Activated naive CD4-positive, alpha-beta T cell treated with anti-CD3 and anti-CD28 coated beads for 36 hours (primary cell): ENCODE measurements at regions of chr10 and their contacts with region 1.

Region 1: GRCh38 chr10:26860443-26861204 is at the start of gene ABI1:
- DNase-seq: peak; percentile 98
- H3K4me3 Mint-ChIP-seq: peak within 1 kb of the TSS; percentile 98
- H3K27ac Mint-ChIP-seq: peak within 1 kb of the TSS; percentile 99
- H3K4me1 Mint-ChIP-seq: peaks cover 30% of the 10 kb centered on the region
- H3K27me3 Mint-ChIP-seq: no peaks in the 10 kb centered on the region
- total RNA-seq, gene ABI1: 34.5 to 37.2 TPM

Region 2: DNA sequence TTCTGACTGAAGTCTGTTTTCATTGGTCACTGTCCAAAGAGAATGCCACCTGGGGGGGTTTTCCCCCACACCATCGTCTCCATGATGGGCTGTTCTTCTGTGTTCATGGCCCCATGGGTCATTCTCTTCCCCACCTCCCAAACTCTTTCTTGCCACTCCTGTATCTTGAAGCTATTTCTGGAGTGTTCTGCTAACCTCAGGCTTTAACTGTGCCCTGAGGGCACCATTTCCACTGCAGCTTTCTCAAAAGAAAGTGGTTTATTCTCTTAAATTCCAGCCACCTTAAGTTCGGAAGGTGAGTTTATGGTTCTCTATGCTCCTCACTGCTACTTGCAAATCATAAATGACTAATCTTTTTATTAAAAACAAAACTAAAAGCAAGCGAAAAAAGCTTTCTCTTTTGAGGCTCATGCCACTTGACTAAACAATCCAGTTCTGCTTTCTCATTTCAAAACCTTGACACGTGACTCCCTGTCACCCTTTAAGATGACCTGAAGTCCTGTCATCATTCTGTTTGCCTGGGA is 429.9 kb before region 1 on chr10:
- CTCF ChIA-PET with region 1: no interaction called
- intact Hi-C with region 1: loop called (anchors 2 kb)
- DNase-seq: peak; percentile 64
- H3K4me3 Mint-ChIP-seq: peak overlapping the region; percentile 46
- H3K27ac Mint-ChIP-seq: peak overlapping the region; percentile 83
- H3K4me1 Mint-ChIP-seq: peaks cover 26% of the 10 kb centered on the region
- H3K27me3 Mint-ChIP-seq: no peaks in the 10 kb centered on the region

Region 3: GRCh38 chr10:26468700-26469099 is 391.9 kb before region 1 on chr10:
- CTCF ChIA-PET with region 1: no interaction called
- intact Hi-C with region 1: no loop called
- DNase-seq: peak; percentile 56
- H3K4me3 Mint-ChIP-seq: peak overlapping the region; percentile 66
- H3K27ac Mint-ChIP-seq: peak overlapping the region; percentile 78
- H3K4me1 Mint-ChIP-seq: peaks cover 83% of the 10 kb centered on the region
- H3K27me3 Mint-ChIP-seq: no peaks in the 10 kb centered on the region

Region 4: DNA sequence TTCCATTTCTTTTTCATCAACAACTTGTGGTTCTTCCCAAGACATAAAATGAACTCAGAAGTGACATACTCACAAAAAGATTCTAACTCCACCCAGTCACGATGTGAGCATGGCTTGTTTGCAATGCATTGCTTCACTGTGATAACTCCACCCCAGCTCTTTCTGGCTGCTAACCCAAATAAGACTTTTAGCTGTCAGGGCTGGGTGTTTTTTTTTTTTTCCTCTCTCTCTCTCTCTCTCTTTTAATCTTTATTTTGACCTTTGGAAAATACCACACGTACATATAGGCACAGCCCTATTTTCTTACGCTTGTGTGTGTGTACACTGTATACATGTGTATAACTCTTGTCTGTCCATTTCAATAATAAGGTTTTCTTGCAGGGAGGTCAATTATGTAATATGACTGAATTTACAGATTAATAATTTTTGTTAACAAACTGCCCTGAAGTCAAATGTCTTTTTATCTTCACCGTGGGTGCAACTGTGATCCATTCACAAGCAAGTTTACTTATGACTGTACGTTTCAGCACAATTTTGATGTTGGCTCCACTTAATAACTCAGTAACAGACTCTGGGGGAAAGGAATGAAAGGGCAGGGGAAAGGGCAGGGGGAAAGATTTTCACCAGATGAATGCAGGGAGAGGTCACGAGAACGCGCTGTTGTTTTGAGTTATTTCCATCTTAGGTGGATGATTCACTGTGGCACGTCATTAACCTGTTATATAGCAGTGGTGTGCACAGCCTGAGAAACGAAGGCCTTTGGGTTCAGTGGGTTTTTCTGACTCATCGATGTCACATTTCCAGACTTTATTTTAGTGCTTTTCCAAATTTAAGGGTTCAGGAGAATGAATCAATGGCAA is 373.4 kb before region 1 on chr10:
- CTCF ChIA-PET with region 1: no interaction called
- intact Hi-C with region 1: loop called (anchors 2 kb)
- DNase-seq: peak; percentile 89
- H3K4me3 Mint-ChIP-seq: peak overlapping the region; percentile 56
- H3K27ac Mint-ChIP-seq: peak overlapping the region; percentile 98
- H3K4me1 Mint-ChIP-seq: peaks cover 68% of the 10 kb centered on the region
- H3K27me3 Mint-ChIP-seq: no peaks in the 10 kb centered on the region

Region 5: DNA sequence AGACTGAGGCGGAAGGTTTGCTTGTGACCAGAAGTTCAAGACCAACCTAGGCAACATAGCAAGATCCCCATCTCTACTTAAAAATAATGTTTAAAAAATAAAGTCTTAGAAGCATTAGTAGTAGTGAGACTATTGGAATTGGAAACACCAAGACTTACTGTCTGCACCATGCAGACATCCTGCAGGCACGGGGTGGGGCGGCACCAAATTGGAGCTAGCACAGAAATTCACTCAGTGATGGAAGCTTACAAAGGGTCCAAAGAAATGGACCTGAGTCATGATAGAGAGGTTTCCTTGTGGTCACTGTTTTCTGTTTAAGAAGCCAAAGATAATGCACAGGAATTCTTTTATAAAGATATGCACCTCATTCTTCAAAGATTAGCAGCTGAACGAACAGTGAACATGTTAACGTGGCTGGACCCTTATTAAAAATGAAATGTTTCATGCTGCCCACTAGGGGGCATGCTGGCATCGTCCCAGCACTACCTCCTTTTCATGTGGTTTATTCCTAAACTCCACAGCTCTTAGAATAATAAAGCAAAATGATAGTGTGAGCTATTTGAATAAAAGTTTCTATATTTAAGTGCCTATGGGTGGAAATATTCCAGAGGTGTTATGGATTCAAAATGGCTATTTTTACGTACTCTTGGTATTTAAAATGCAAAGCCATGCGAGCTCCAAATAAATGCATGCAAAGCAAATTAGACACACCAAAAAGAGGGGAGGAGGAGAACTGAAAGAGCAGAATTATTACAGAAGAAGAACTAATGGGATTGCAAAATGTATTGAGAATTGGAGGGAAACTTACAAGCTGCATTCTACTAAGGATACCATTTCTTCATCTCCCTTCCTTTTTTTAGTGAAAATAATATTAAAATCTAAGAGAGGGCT is 134.5 kb before region 1 on chr10:
- CTCF ChIA-PET with region 1: interaction called, 9 read pairs
- intact Hi-C with region 1: loop called (anchors 1 kb)
- DNase-seq: peak; percentile 51
- H3K4me3 Mint-ChIP-seq: no peak overlapping the region
- H3K27ac Mint-ChIP-seq: no peak overlapping the region
- H3K4me1 Mint-ChIP-seq: no peaks in the 10 kb centered on the region
- H3K27me3 Mint-ChIP-seq: no peaks in the 10 kb centered on the region

Region 6: DNA sequence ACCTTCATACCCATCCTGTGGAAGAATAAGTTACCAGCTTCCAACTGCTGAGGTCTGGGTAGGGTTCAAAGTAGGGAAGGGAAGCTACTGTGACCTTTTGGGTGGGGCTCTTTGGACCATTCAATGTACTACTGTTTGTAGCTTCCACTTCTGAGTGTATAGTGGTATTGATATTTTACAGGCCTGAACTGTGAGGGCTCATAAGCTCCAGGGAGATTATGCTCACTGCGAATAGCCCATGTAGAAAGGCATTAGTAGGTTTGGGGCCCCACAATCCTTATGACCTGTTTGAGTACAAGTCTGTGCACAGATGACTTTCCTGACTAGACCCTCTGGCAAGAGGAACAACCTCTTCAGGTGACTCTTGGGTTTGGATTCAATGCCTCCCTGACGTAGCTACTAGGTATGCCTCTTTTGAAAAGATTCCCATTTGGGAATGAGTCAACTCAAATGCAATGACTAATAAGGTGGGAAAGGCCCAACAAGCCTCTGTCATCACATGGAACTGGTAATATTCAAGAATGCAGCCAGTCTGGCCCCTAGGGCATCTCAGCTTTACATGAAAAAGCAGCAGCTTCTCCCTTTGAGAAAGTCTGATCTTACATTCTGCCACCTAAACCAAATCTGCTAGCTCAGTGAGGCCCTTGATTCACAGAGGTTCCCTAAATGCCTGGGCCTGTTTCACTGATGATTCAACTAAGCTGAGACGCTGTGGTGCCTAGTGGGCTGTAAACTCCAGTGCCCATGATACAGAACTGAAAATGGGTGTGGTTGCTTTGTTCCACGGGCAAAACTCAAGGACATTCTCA is 79.6 kb before region 1 on chr10:
- CTCF ChIA-PET with region 1: interaction called, 3 read pairs
- intact Hi-C with region 1: loop called (anchors 1 kb)
- DNase-seq: peak; percentile 70
- H3K4me3 Mint-ChIP-seq: no peak overlapping the region
- H3K27ac Mint-ChIP-seq: peak overlapping the region; percentile 86
- H3K4me1 Mint-ChIP-seq: peaks cover 82% of the 10 kb centered on the region
- H3K27me3 Mint-ChIP-seq: no peaks in the 10 kb centered on the region

Region 7: DNA sequence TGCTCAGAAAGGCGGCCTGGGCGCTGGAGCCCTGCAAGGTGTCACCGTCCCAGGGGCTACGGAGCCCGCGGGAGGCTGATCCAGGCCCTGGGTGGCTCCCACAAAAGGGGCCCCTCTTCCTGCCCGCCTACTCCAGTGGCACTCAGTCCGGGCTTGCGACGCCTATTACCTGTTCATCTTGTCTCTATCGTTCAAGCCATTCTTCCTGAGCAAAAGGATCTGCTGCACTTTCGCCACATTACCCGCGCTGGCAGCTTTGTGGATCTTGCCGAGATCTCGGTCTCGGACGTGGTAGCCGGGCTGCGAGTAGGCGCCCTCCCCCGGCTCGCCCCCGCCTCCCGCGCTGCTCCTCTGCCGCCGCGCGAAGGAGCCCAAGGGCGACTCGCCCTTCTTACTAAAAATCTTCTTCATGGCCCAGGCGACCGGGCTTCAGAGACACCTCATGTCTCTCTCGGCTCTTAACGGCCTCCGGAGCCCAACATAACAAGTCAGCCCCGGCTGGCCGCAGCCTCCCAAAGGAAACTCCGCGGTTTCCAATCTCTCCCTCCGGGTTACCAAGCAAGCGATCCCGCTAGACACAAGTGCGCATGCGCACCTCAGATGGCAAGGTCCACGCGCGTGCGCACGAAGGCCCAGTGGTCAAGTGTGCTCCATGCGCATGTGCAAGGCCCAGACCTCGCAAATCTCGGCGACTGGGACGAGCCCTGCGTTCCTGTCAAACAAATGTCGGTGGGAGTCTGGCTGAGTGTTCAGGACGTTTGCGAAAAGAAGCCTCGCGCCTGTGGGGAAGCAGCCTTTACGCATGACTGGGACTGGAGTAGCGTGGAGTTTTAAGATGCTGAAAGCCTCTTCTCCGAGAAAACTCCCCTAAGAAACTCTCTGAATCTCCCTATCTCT is 239.5 kb after region 1 on chr10 and contains the start of gene ANKRD26:
- CTCF ChIA-PET with region 1: no interaction called
- intact Hi-C with region 1: loop called (anchors 1 kb)
- DNase-seq: peak; percentile 96
- H3K4me3 Mint-ChIP-seq: peak within 1 kb of the TSS; percentile 83
- H3K27ac Mint-ChIP-seq: peak within 1 kb of the TSS; percentile 92
- H3K4me1 Mint-ChIP-seq: peaks cover 44% of the 10 kb centered on the region
- H3K27me3 Mint-ChIP-seq: peaks cover 2% of the 10 kb centered on the region
- total RNA-seq, gene ANKRD26: 4.6 to 6.6 TPM

Region 8: GRCh38 chr10:27504007-27504807 is 643.6 kb after region 1 on chr10 and contains the start of gene RAB18:
- CTCF ChIA-PET with region 1: no interaction called
- intact Hi-C with region 1: loop called (anchors 1 kb)
- DNase-seq: peak; percentile 99
- H3K4me3 Mint-ChIP-seq: peak within 1 kb of the TSS; percentile 99
- H3K27ac Mint-ChIP-seq: peak within 1 kb of the TSS; percentile 92
- H3K4me1 Mint-ChIP-seq: peaks cover 41% of the 10 kb centered on the region
- H3K27me3 Mint-ChIP-seq: no peaks in the 10 kb centered on the region
- total RNA-seq, gene RAB18: 35.4 to 41.3 TPM